Breast epithelium (tissue), 4 donors: ENCODE measurements at regions of chr9 and their contacts with region 1.

Region 1: GRCh38 chr9:99092643-99093491 is 12.0 kb upstream of the TGFBR1 start:
- DNase-seq: no peak
- H3K4me3 ChIP-seq: no peak overlapping the region
- H3K27ac ChIP-seq: no peak overlapping the region
- H3K4me1 ChIP-seq: peaks cover 0 to 3% of the 10 kb centered on the region in 2 donors
- H3K27me3 ChIP-seq: no peaks in the 10 kb centered on the region
- CTCF ChIP-seq: no peak
- POLR2A ChIP-seq: no peak

Region 2: GRCh38 chr9:98833090-98833956 is 259.5 kb before region 1 on chr9:
- intact Hi-C with region 1: no loop called
- DNase-seq: no peak
- H3K4me3 ChIP-seq: no peak overlapping the region
- H3K27ac ChIP-seq: no peak overlapping the region
- H3K4me1 ChIP-seq: no peaks in the 10 kb centered on the region
- H3K27me3 ChIP-seq: no peaks in the 10 kb centered on the region
- CTCF ChIP-seq: no peak
- POLR2A ChIP-seq: no peak

Region 3: DNA sequence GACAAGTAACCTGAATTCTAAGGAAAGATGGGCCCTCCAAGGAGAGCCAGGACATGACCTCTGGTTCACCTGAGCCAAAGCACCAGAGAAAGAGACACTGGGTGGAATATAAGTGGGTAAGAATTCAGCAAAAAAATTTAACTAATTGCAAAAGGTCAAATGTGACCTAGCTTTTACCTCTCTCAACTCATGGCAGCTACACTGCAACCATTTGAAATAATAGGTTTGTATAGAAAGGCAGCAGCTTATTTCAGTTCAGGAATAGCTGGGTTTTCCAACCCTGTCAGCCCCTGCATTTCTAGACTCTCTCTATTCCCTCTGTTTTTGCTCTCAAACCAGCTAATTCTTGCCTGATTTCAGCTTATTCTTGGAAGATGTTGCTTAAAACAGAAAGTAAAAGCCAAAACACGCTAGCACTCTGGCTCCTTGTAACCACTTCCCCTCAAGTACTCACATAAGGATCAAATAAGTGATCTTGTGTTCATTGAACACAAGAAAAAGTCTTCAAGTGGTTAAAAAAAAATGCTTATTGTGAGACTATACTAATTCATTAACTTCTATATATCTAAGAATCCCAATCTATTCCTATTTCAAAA is 627.7 kb after region 1 on chr9:
- intact Hi-C with region 1: loop called (anchors 10 kb)
- DNase-seq: no peak
- H3K4me3 ChIP-seq: peak overlapping the region; percentile 10 to 49 (median 32)
- H3K27ac ChIP-seq: peak overlapping the region; percentile 46 to 54
- H3K4me1 ChIP-seq: no peaks in the 10 kb centered on the region
- H3K27me3 ChIP-seq: no peaks in the 10 kb centered on the region
- CTCF ChIP-seq: no peak
- POLR2A ChIP-seq: no peak

Region 4: GRCh38 chr9:100411472-100412283 is 1318.8 kb after region 1 on chr9:
- intact Hi-C with region 1: loop called (anchors 5 kb)
- DNase-seq: peak; percentile 79 to 85
- H3K4me3 ChIP-seq: peak overlapping the region; percentile 37 to 71 (median 54)
- H3K27ac ChIP-seq: no peak overlapping the region
- H3K4me1 ChIP-seq: no peaks in the 10 kb centered on the region
- H3K27me3 ChIP-seq: no peaks in the 10 kb centered on the region
- CTCF ChIP-seq: no peak
- POLR2A ChIP-seq: no peak